T-cell (primary cell): ENCODE measurements at regions of chr10 and their contacts with region 1.

Region 1: GRCh38 chr10:117001144-117001543 is 3.8 kb downstream of the SHTN1 start:
- DNase-seq: no peak
- ATAC-seq: no peak
- H3K4me3 ChIP-seq: no peak overlapping the region
- H3K4me3 Mint-ChIP-seq: no peak overlapping the region
- H3K27ac ChIP-seq: no peak overlapping the region
- H3K27ac Mint-ChIP-seq: no peak overlapping the region
- H3K4me1 ChIP-seq: peaks cover 0 to 10% of the 10 kb centered on the region in 2 experiments
- H3K4me1 Mint-ChIP-seq: peaks cover 5 to 10% (median 6%) of the 10 kb centered on the region in 3 donors
- H3K27me3 ChIP-seq: peaks cover 6 to 26% of the 10 kb centered on the region in 2 experiments
- H3K27me3 Mint-ChIP-seq: peaks cover 33 to 45% of the 10 kb centered on the region in 2 donors

Region 2: GRCh38 chr10:116985611-116986010 is 15.5 kb before region 1 on chr10:
- CTCF ChIA-PET with region 1: no interaction called
- POLR2A ChIA-PET with region 1: interaction called in 1 of 2 experiments, 12 read pairs
- DNase-seq: no peak
- ATAC-seq: no peak
- H3K4me3 ChIP-seq: no peak overlapping the region
- H3K4me3 Mint-ChIP-seq: no peak overlapping the region
- H3K27ac ChIP-seq: no peak overlapping the region
- H3K27ac Mint-ChIP-seq: no peak overlapping the region
- H3K4me1 ChIP-seq: no peaks in the 10 kb centered on the region
- H3K4me1 Mint-ChIP-seq: no peaks in the 10 kb centered on the region
- H3K27me3 ChIP-seq: peaks cover 0 to 3% of the 10 kb centered on the region in 2 experiments
- H3K27me3 Mint-ChIP-seq: peaks cover 0 to 14% of the 10 kb centered on the region in 2 donors